GM13977 (cell line): ENCODE measurements at regions of chr1 and their contacts with region 1.

Region 1: DNA sequence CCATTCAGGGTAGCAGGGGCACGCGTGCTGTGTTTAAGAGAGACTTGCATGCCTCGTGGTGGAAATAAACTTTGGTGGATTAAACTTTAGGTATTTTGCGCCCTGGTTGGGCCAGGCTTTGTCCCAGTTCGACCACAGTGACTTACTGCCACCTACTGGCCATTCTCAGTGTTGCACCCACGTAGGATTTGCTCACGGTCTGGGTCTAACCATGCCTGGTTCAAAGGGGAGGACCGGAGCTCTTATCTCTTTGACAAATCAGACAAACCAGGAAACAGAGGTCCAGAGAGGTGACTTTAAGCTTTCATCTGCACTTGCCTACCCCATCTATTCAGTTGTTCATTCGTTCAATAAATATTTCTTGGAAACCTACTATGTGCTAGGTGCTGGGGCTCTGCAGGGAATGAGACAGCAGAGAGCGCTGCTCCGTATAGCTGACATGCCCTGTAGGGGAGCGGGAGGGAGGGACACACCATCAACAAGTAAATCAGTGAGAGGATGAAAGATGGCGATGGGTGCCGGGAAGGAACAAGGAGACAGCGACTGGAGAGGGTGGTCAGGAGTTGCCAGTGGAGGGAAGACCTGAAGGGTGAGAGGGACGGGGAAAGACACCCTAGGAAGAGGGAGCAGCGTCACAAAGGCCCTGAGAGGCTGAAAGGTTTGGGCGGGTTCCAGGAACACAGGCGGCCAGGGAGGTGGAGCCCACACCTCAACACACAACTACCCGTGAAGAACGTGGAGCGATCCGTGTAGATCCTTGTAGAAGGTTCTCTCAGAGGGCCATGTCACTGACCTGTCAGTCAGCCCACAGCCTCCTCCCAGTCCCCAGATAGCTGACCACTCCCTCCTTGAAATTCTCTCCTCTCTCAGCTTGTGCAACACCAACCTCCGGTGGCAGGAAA is 27.2 kb upstream of the TINAGL1 start:
- DNase-seq: peak; percentile 85
- CTCF ChIP-seq: peak; percentile 86

Region 2: DNA sequence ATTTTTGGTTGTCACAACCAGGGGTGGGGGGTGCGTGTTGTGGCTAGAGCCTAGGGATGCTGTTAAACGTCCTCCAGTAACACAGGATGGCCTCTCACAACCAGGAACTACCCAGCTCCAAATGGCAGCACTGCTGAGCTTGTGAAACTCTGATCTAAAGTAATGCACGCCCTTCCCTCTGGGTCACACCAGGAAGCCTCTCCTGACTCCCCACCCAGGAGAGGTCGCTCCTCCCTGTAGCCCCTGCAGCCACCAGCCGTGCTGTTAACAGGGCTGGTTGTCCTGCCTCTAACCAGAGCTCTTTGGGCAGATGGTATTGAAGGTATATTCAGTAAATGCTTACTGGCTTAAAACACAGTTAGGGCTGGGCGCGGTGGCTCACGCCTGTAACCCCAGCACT is 382.7 kb before region 1 on chr1:
- in situ Hi-C with region 1: loop called (anchors 10 kb)
- DNase-seq: no peak
- CTCF ChIP-seq: no peak

Region 3: DNA sequence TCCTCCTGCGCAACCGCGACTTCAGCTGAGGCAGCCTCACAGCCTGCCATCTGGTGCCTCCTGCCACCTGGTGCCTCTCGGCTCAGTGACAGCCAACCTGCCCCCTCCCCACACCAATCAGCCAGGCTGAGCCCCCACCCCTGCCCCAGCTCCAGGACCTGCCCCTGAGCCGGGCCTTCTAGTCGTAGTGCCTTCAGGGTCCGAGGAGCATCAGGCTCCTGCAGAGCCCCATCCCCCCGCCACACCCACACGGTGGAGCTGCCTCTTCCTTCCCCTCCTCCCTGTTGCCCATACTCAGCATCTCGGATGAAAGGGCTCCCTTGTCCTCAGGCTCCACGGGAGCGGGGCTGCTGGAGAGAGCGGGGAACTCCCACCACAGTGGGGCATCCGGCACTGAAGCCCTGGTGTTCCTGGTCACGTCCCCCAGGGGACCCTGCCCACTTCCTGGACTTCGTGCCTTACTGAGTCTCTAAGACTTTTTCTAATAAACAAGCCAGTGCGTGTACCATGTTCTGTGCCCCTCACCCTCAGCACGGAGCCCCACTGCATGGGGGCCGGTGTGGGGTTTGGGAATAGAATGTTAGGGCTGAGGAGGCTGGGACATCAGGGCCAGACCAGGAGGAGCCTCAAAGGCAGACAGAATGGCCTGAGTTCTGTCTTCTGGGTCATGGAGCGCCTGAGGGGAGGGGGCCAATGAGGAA is 114.8 kb before region 1 on chr1:
- in situ Hi-C with region 1: loop called (anchors 25 kb)
- DNase-seq: no peak
- CTCF ChIP-seq: no peak

Region 4: DNA sequence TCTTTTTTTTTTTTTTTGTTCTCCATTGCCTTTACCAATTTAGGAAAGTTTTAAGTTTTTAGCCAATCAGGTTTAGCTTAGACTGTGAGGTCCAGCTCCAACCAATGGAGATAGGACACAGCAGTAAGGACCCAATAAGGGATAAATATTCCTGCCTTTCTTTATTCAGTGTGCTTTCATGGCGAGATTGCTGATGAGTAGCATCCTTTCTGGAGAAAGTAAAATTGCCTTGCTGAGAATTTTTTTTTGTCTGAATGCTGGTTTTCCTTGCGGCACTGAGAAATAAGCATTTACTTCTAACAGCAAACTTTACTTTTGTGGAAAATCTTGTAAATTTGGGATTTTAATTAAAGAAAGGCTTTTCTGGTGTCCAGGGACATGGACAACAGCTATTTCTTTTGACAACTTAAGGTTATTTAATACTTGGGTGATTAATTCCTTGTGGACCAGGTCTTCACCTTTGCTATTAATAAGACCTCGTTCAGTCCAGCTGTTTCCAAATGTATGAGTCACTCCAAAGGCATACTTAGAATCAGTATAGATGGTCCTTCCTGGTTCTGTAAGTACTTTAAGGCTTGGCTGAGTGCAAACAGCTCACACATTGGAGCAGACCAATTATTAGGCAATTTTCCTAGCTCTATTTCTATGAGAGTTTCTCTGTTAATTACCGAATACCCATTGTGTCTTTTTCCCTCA is 82.0 kb before region 1 on chr1:
- in situ Hi-C with region 1: no loop called
- DNase-seq: no peak
- CTCF ChIP-seq: no peak